ENCODE measurements at regions of chrX and their contacts with region 1.

Region 1: GRCh38 chrX:2767650-2768455 is 16.0 kb downstream of the XG start:
- DNase-seq: peak; percentile 90
- H3K4me3 ChIP-seq: no peak overlapping the region
- H3K27ac ChIP-seq: peak overlapping the region in 3 of 4 donors; percentile 66 to 77 (median 69)
- H3K4me1 ChIP-seq: peaks cover 0 to 19% (median 17%) of the 10 kb centered on the region in 4 donors
- H3K27me3 ChIP-seq: no peaks in the 10 kb centered on the region
- CTCF ChIP-seq: no peak
- EP300 ChIP-seq: peak; percentile 7 to 82 (median 52)
- POLR2A ChIP-seq: no peak

Region 2: DNA sequence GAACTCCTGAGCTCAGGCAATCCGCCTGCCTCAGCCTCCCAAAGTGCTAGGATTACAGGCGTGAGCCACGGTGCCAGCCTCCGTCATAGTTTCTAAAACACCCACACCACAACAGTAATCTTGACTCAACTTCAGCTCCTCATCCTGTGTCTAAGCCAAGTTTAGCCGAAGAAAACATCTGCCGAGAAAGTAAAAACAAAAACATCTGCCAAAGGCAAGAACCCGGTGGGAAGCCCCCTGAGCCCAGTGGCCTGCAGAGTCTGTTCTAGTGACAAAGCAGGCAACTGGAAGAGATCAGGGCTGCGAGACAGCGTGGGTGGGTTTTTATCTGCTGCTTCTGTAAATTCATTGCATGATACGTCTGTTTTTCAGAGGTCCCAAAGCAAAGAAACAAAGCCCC is 103.4 kb before region 1 on chrX:
- intact Hi-C with region 1: no loop called
- DNase-seq: no peak
- H3K4me3 ChIP-seq: no peak overlapping the region
- H3K27ac ChIP-seq: peak overlapping the region in 2 of 4 donors; percentile 5 to 70
- H3K4me1 ChIP-seq: peaks cover 0 to 12% (median 0%) of the 10 kb centered on the region in 4 donors
- H3K27me3 ChIP-seq: no peaks in the 10 kb centered on the region
- CTCF ChIP-seq: no peak
- EP300 ChIP-seq: no peak
- POLR2A ChIP-seq: no peak

Region 3: DNA sequence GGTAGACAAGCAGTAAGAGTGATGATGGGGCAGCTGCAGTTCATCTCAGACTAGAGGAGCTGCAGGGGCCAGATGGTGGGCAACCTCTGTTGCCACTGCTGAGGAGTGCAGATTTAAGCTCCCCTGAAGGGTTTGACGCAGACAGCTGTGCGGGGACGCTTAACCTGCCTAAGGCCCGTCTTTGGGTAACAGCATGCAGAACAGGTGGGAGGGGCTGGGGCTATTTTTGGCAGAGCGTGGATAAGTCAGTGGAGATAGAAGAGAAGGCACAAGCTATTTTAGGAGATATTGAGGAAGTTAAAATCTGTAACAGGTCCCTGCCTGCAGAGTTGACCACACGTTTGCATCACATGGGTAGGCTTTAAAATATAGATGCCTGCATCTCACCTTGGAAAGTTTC is 66.3 kb before region 1 on chrX:
- intact Hi-C with region 1: loop called (anchors 5 kb)
- DNase-seq: no peak
- H3K4me3 ChIP-seq: no peak overlapping the region
- H3K27ac ChIP-seq: peak overlapping the region in 3 of 4 donors; percentile 44 to 97 (median 62)
- H3K4me1 ChIP-seq: peaks cover 0 to 100% (median 94%) of the 10 kb centered on the region in 4 donors
- H3K27me3 ChIP-seq: no peaks in the 10 kb centered on the region
- CTCF ChIP-seq: no peak
- EP300 ChIP-seq: no peak
- POLR2A ChIP-seq: no peak